GM10248 (cell line): ENCODE measurements at regions of chr5 and their contacts with region 1.

Region 1: DNA sequence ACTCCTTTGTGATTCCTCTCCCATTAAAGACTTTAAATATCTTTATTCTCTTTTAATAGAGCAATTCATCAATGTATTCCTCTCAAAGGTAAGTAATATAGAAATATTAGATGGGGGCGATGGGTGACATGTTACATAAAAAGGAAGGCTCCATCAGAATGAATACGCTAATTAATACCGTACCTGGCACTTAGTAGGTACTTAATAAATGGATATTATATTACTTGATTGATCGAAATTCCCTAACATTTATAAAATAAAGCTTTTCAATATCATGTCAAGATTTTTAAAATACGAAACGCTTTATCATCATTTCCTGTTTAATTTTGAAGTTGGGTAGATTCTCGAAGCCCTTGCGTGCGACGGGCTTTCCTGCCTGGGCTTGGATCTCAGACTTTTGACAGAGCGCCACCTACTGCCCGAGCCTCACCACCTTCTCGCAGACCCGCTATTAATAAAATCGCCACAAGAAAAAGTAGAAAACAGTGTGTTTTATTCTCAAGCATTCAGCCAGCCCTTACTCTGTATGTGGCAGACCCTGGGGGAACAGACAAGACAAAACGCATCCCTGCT is 99.4 kb downstream of the C5orf15 start:
- DNase-seq: peak; percentile 77
- CTCF ChIP-seq: peak; percentile 70

Region 2: GRCh38 chr5:133831491-133832224 is 37.4 kb before region 1 on chr5:
- CTCF ChIA-PET with region 1: interaction called, 12 read pairs
- POLR2A ChIA-PET with region 1: no interaction called
- DNase-seq: no peak
- CTCF ChIP-seq: no peak

Region 3: GRCh38 chr5:133848341-133848811 is 20.7 kb before region 1 on chr5:
- CTCF ChIA-PET with region 1: interaction called, 28 read pairs
- POLR2A ChIA-PET with region 1: no interaction called
- DNase-seq: no peak
- CTCF ChIP-seq: no peak

Region 4: GRCh38 chr5:133895979-133896845 is 27.2 kb after region 1 on chr5:
- CTCF ChIA-PET with region 1: interaction called, 14 read pairs
- POLR2A ChIA-PET with region 1: no interaction called
- DNase-seq: no peak
- CTCF ChIP-seq: no peak